HepG2 (cell line): ENCODE measurements at regions of chr2 and their contacts with region 1.

Region 1: GRCh38 chr2:115171751-115172150 is 729.3 kb downstream of the DPP10 start:
- DNase-seq: no peak
- ATAC-seq: no peak
- H3K4me3 ChIP-seq: no peak overlapping the region
- H3K27ac ChIP-seq: no peak overlapping the region
- H3K4me1 ChIP-seq: no peaks in the 10 kb centered on the region
- H3K27me3 ChIP-seq: no peaks in the 10 kb centered on the region
- CTCF ChIP-seq: no peak
- EP300 ChIP-seq: no peak
- POLR2A ChIP-seq: no peak
- RAD21 ChIP-seq: no peak

Region 2: GRCh38 chr2:115194623-115195022 is 22.9 kb after region 1 on chr2:
- CTCF ChIA-PET with region 1: no interaction called
- POLR2A ChIA-PET with region 1: no interaction called
- in situ Hi-C with region 1: no loop called
- intact Hi-C with region 1: loop called (anchors 2 kb)
- DNase-seq: no peak
- ATAC-seq: peak; percentile 41; the same call in 1 of the 3 replicates
- H3K4me3 ChIP-seq: no peak overlapping the region
- H3K27ac ChIP-seq: no peak overlapping the region
- H3K4me1 ChIP-seq: no peaks in the 10 kb centered on the region
- H3K27me3 ChIP-seq: no peaks in the 10 kb centered on the region
- CTCF ChIP-seq: 0 out of 2 replicates have a peak, but pooled peaks have one; percentile 13
- EP300 ChIP-seq: no peak
- POLR2A ChIP-seq: no peak
- RAD21 ChIP-seq: no peak